ENCODE measurements at regions of chr3 and their contacts with region 1.

Region 1: GRCh38 chr3:15629860-15630597 is 28.5 kb downstream of the BTD start:
- DNase-seq: peak; percentile 76
- H3K4me3 ChIP-seq: no peak overlapping the region; a peak in 2 of 4 replicates
- H3K27ac ChIP-seq: peak overlapping the region; percentile 79 to 94; a peak in 3 of 4 replicates
- H3K4me1 ChIP-seq: peaks cover 26 to 27% of the 10 kb centered on the region in 2 experiments
- H3K27me3 ChIP-seq: no peaks in the 10 kb centered on the region
- CTCF ChIP-seq: peak; percentile 87
- EP300 ChIP-seq: no peak
- RAD21 ChIP-seq: peak; percentile 93

Region 2: GRCh38 chr3:14947886-14948555 is 682.0 kb before region 1 on chr3:
- CTCF ChIA-PET with region 1: no interaction called
- POLR2A ChIA-PET with region 1: no interaction called
- DNase-seq: peak; percentile 99
- H3K4me3 ChIP-seq: peak overlapping the region; percentile 92 to 95
- H3K27ac ChIP-seq: peak overlapping the region; percentile 99 to 100
- H3K4me1 ChIP-seq: peaks cover 0 to 19% of the 10 kb centered on the region in 2 experiments; a peak in 3 of 4 replicates
- H3K27me3 ChIP-seq: no peaks in the 10 kb centered on the region
- CTCF ChIP-seq: no peak
- EP300 ChIP-seq: no peak
- RAD21 ChIP-seq: no peak

Region 3: GRCh38 chr3:15385901-15386653 is 244.0 kb before region 1 on chr3:
- CTCF ChIA-PET with region 1: no interaction called
- POLR2A ChIA-PET with region 1: no interaction called
- DNase-seq: no peak
- H3K4me3 ChIP-seq: no peak overlapping the region
- H3K27ac ChIP-seq: no peak overlapping the region
- H3K4me1 ChIP-seq: peaks cover 0 to 10% of the 10 kb centered on the region in 2 experiments; a peak in 1 of 4 replicates
- H3K27me3 ChIP-seq: no peaks in the 10 kb centered on the region
- CTCF ChIP-seq: no peak
- EP300 ChIP-seq: no peak
- RAD21 ChIP-seq: no peak

Region 4: DNA sequence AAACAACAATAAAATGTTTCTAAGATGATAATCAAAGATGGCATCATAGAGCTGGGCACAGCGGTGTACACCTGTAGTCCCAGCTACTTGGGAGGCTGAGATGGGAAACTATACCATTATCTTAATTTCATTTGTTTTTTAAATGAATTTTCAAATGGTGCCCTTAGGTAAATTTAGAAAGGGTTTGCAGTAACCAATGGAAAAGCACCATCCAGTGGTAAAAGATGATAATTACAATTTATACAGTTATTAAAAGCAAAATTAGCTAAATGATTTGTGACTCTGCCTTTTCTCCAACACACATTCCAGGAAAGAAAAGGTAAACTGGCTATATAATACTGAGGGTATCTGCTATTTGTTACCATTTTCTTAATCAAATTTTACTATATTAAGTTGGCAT is 182.2 kb after region 1 on chr3:
- CTCF ChIA-PET with region 1: interaction called, 78 read pairs
- POLR2A ChIA-PET with region 1: no interaction called
- DNase-seq: peak; percentile 21
- H3K4me3 ChIP-seq: no peak overlapping the region
- H3K27ac ChIP-seq: no peak overlapping the region
- H3K4me1 ChIP-seq: peaks cover 0 to 5% of the 10 kb centered on the region in 2 experiments; a peak in 2 of 4 replicates
- H3K27me3 ChIP-seq: no peaks in the 10 kb centered on the region
- CTCF ChIP-seq: peak; percentile 70
- EP300 ChIP-seq: no peak
- RAD21 ChIP-seq: peak; percentile 75